Heart right ventricle (tissue), 16 donors: ENCODE measurements at regions of chr17 and their contacts with region 1.

Region 1: DNA sequence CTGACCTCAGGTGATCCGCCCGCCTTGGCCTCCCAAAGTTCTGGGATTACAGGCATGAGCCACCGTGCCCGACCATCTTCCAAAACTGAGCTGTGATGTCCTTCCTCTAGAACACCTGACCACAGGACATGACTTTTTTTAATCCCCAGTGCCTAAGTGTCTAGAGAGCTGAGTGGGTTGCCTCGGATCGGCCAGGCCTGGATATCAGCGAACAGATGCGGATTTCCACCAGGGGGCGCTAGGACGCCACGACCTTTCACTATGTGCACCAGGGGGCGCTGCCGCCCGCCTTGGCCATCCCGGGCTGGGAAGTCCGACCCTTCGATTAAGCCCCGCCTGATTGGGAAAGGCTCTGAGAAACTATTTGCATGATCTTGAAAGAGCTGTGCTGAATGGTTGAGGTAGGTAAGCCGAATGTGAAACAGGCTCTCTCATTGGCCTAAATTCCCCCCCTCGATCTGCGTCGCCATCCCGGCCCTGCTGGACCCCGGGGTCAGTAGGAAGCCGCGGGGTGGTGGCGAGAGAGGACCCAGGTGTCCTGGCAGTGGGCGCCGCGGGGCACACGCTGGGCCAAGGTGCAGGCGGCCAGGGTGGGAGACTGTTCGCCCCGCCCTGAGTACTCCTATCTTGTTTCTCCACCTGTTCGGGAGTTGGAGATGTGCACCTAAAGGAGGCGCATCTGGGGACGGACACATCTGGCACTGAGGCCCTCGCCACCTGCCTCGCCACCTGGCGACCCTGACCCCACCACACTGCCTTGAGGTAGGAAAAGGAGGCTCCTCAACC is at the start of gene ACBD4:
- DNase-seq: peak; percentile 94 to 97
- ATAC-seq: peak; percentile 73 to 90 (median 86)
- H3K4me3 ChIP-seq: peak within 1 kb of the TSS; percentile 61 to 78 (median 70)
- H3K27ac ChIP-seq: peak within 1 kb of the TSS in 9 of 10 donors; percentile 65 to 86 (median 79)
- H3K4me1 ChIP-seq: peaks cover 13 to 41% (median 35%) of the 10 kb centered on the region in 9 donors
- H3K27me3 ChIP-seq: no peaks in the 10 kb centered on the region
- CTCF ChIP-seq: peak; percentile 100
- total RNA-seq, gene ACBD4: 6.1 to 9.7 (median 7.3) TPM

Region 2: DNA sequence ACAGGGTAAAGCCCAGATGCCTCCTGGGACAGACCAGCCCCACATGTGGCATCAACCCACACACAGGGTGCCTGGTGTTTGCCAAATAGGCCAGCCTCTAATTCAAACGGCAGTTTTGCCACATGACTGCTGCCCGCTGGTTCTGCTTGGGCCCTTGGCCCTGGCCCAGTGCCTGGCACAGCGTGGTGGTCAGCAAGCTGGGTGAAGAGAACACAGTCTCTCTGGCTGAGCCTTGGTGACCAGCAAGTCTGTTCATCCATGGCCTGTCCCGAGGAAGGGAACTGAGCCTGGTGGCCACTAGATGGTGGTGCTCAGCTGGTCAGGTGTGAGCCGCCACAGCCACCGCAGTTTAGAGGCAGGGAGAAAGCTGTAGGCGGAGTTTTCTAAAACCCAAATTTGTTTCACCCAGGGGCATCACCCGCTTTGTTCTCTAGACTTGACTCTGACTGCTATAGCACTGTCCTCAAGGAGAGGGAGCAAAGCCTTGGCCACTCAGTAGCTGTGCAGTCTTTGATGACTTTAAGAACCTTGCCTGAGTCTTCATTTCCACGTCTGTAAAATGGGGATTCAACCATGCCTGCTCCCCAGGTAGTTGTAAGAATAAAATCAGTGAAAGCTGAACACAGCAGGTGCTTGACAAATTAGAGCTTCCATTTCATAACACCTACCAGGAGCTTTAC is 215.4 kb before region 1 on chr17:
- intact Hi-C with region 1: loop called in 4 of 10 experiments (anchors 1 to 5 kb)
- DNase-seq: peak; percentile 78 to 80
- ATAC-seq: peak; percentile 71 to 91 (median 84)
- H3K4me3 ChIP-seq: no peak overlapping the region
- H3K27ac ChIP-seq: peak overlapping the region in 7 of 10 donors; percentile 32 to 64 (median 44)
- H3K4me1 ChIP-seq: peaks cover 4 to 48% (median 28%) of the 10 kb centered on the region in 9 donors
- H3K27me3 ChIP-seq: peaks cover 0 to 15% (median 0%) of the 10 kb centered on the region in 7 donors
- CTCF ChIP-seq: peak; percentile 70 to 94 (median 84)

Region 3: DNA sequence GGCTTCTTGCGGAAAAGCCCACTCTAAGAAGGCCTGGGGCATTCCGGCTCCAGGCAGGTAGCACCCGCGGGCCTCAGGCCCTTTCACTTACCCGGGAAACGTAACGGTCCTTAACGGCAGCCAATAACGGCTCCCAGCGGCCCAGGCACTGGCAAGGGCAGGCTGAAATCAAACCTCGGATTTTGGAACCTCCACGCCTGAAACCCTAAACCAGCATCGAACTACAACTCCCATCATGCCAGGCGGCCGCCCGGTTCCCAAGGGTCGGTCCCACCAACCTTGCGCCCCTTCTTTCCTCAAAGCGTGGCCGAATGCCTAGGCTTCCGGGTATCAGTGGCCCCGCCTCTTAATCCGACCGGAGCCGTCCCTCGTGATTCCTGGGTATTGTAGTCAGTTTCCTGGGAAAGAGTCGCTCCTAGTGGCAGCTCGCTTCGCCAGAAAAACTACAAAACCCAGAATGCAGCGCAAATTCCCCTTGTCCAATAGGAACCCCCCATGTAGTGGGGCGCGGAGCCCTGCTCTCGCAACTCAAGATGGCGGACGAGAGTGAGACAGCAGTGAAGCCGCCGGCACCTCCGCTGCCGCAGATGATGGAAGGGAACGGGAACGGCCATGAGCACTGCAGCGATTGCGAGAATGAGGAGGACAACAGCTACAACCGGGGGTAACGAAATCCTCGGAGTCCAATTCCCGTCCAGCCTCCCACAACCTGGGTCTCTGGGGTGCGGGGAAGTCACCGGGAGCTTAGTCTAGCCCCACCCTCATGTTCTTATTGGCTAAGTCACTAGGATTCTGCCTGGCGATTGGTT is 74.4 kb before region 1 on chr17 and contains the start of gene NMT1:
- intact Hi-C with region 1: loop called in 1 of 10 experiments (anchors 5 kb)
- DNase-seq: peak; percentile 95 to 99
- ATAC-seq: peak; percentile 97 to 99 (median 98)
- H3K4me3 ChIP-seq: peak within 1 kb of the TSS; percentile 56 to 93 (median 70)
- H3K27ac ChIP-seq: peak within 1 kb of the TSS; percentile 82 to 97 (median 92)
- H3K4me1 ChIP-seq: peaks cover 19 to 59% (median 47%) of the 10 kb centered on the region in 9 donors
- H3K27me3 ChIP-seq: no peaks in the 10 kb centered on the region
- CTCF ChIP-seq: peak in 3 of 9 donors; percentile 8 to 22 (median 13)
- total RNA-seq, gene NMT1: 60.6 to 110 (median 74.4) TPM

Region 4: DNA sequence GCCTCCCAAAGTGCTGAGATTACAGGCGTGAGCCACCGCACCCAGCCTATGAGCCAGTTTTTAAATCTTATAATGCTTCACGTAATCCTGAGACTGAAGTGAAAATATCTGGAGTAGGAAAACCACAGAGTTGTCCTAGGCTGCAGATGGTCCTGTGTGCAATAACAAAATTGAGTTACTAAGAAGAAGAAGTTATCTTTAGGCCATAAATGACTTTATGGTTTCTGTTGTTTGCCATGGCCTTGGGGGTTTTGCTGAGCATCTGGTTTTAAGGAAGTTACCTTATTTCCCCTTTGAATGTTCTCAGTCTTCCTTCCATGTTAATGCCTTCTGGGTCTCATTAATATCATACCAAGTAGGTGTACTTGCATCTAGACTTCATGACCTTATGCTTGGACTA is 57.7 kb before region 1 on chr17:
- intact Hi-C with region 1: no loop called
- DNase-seq: no peak
- ATAC-seq: peak in 2 of 8 donors; percentile 18 to 25
- H3K4me3 ChIP-seq: no peak overlapping the region
- H3K27ac ChIP-seq: peak overlapping the region in 1 of 10 donors; percentile 11
- H3K4me1 ChIP-seq: peaks cover 0 to 60% (median 28%) of the 10 kb centered on the region in 9 donors
- H3K27me3 ChIP-seq: no peaks in the 10 kb centered on the region
- CTCF ChIP-seq: no peak

Region 5: GRCh38 chr17:45098869-45099616 is 36.3 kb before region 1 on chr17:
- intact Hi-C with region 1: loop called in 4 of 10 experiments (anchors 1 to 5 kb)
- DNase-seq: peak; percentile 87 to 88
- ATAC-seq: peak; percentile 70 to 86 (median 78)
- H3K4me3 ChIP-seq: no peak overlapping the region
- H3K27ac ChIP-seq: peak overlapping the region in 7 of 10 donors; percentile 6 to 53 (median 18)
- H3K4me1 ChIP-seq: peaks cover 4 to 55% (median 23%) of the 10 kb centered on the region in 9 donors
- H3K27me3 ChIP-seq: no peaks in the 10 kb centered on the region
- CTCF ChIP-seq: peak; percentile 79 to 94 (median 92)

Region 6: GRCh38 chr17:45115871-45116724 is 19.3 kb before region 1 on chr17:
- intact Hi-C with region 1: loop called in 1 of 10 experiments (anchors 2 kb)
- DNase-seq: no peak
- ATAC-seq: no peak
- H3K4me3 ChIP-seq: no peak overlapping the region
- H3K27ac ChIP-seq: no peak overlapping the region
- H3K4me1 ChIP-seq: peaks cover 0 to 14% (median 9%) of the 10 kb centered on the region in 9 donors
- H3K27me3 ChIP-seq: peaks cover 0 to 8% (median 0%) of the 10 kb centered on the region in 7 donors
- CTCF ChIP-seq: no peak

Region 7: DNA sequence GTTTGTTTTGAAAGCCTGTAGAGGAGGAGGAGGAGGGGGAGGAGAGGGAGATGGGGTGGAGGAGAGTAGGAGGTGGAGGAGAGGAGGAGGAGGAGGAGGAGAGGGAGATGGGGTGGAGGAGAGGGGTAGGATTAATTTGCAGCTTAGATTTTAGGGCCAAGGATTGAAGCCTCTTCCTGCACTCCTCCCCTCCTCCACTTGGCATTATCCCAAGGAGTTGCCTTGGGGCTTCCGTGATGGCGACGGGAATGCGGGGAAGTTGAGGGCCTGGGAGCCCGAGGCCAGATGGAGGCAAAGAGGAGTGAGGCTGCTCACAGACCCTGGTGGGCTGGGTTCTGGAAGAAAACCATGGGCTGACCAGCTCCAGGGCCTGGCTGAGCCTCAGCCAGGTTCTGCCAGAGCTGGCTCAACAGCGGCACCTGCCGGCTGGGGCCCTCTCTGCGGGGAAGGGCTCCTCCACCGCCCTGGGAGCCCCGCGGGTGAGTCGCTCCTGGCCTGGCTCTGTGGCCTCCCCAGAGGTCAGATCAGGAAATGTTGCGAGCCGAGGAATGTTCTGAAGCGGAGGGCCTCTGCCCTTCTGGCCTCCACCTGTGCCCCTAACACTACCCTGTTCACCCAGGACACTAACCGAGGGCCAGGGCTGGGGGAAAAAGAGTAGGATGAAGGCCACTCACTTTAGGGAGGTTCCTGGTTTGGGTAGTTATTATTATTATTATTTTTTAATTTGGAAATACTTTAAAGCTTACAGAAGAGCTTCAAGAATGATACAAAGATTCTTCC is 62.4 kb after region 1 on chr17:
- intact Hi-C with region 1: loop called (anchors 1 to 5 kb)
- DNase-seq: peak; percentile 91 to 96
- ATAC-seq: peak; percentile 95 to 100 (median 98)
- H3K4me3 ChIP-seq: peak overlapping the region in 1 of 10 donors; percentile 1
- H3K27ac ChIP-seq: peak overlapping the region in 7 of 10 donors; percentile 36 to 65 (median 48)
- H3K4me1 ChIP-seq: peaks cover 0 to 23% (median 10%) of the 10 kb centered on the region in 9 donors
- H3K27me3 ChIP-seq: no peaks in the 10 kb centered on the region
- CTCF ChIP-seq: peak; percentile 98 to 100 (median 99)

Region 8: GRCh38 chr17:45385331-45385997 is 250.1 kb after region 1 on chr17:
- intact Hi-C with region 1: loop called in 1 of 10 experiments (anchors 10 kb)
- DNase-seq: peak; percentile 90 to 91
- ATAC-seq: peak; percentile 91 to 97 (median 95)
- H3K4me3 ChIP-seq: no peak overlapping the region
- H3K27ac ChIP-seq: peak overlapping the region in 1 of 10 donors; percentile 49
- H3K4me1 ChIP-seq: peaks cover 0 to 47% (median 20%) of the 10 kb centered on the region in 9 donors
- H3K27me3 ChIP-seq: peaks cover 0 to 8% (median 0%) of the 10 kb centered on the region in 7 donors
- CTCF ChIP-seq: peak; percentile 96 to 100 (median 98)